Sigmoid colon (tissue), 7 donors: ENCODE measurements at regions of chr19 and their contacts with region 1.

Region 1: DNA sequence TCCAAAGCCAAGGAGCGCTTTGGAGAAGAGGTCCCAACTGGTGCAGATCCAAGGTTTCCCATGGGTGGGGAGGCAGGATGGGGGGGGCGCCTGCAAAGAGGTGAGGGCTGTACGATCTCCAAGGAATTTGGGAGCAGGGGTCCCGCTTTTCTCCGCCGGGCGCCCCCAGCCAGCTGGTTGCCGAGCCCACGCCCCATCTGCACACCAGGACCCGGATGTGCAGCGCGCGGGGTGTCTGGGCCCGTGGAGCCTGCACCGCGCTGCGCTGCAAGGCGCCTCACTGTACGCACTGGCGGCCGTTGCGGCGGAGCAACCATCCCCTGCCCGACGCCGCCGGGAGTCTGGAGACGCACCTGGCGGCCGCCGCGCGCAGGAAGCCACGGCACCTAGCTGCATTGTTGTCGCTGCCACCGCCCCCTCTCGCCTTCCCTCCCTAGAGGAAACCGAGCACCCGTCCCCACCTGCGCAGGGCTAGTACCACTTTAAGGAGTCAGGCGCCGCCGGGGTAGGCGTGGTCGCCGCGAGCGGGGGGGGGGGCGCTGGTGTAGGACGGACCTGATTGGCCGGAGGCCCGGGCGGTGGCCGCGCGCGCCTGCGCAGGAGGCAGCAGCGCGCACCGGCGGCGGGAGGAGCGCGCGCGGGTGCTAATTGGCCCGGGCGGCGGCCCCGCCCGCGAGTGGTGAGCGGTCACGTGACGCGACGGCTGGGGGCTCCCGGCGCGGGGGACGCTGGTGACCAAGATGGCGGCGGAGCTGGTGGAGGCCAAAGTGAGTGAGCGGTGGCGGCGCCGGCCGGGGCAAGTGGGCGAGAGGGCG is at the start of gene PIAS4:
- DNase-seq: peak; percentile 97
- H3K4me3 ChIP-seq: peak within 1 kb of the TSS; percentile 72 to 100 (median 98)
- H3K27ac ChIP-seq: peak within 1 kb of the TSS; percentile 84 to 99 (median 97)
- H3K4me1 ChIP-seq: peaks cover 0 to 48% (median 47%) of the 10 kb centered on the region in 4 donors
- H3K27me3 ChIP-seq: no peaks in the 10 kb centered on the region
- CTCF ChIP-seq: no peak
- EP300 ChIP-seq: no peak
- POLR2A ChIP-seq: peak in 1 of 2 donors; percentile 49
- total RNA-seq, gene PIAS4: 16.5 to 29.9 (median 19.3) TPM

Region 2: GRCh38 chr19:4023600-4024398 is 16.6 kb after region 1 on chr19:
- intact Hi-C with region 1: no loop called
- DNase-seq: no peak
- H3K4me3 ChIP-seq: no peak overlapping the region
- H3K27ac ChIP-seq: peak overlapping the region in 1 of 4 donors; percentile 3
- H3K4me1 ChIP-seq: peaks cover 0 to 21% (median 13%) of the 10 kb centered on the region in 4 donors
- H3K27me3 ChIP-seq: no peaks in the 10 kb centered on the region
- CTCF ChIP-seq: no peak
- EP300 ChIP-seq: no peak
- POLR2A ChIP-seq: no peak

Region 3: GRCh38 chr19:4065430-4066175 is 58.4 kb after region 1 on chr19:
- intact Hi-C with region 1: loop called (anchors 2 kb)
- DNase-seq: peak; percentile 99
- H3K4me3 ChIP-seq: peak overlapping the region; percentile 89 to 100 (median 94)
- H3K27ac ChIP-seq: peak overlapping the region; percentile 99 to 100 (median 100)
- H3K4me1 ChIP-seq: peaks cover 0 to 54% (median 45%) of the 10 kb centered on the region in 4 donors
- H3K27me3 ChIP-seq: no peaks in the 10 kb centered on the region
- CTCF ChIP-seq: no peak
- EP300 ChIP-seq: no peak
- POLR2A ChIP-seq: no peak